MCF 10A (cell line): ENCODE measurements at regions of chr1 and their contacts with region 1.

Region 1: GRCh38 chr1:181189691-181190363 is 101.3 kb downstream of the IER5 start:
- DNase-seq: peak; percentile 69
- H3K4me3 Mint-ChIP-seq: no peak overlapping the region
- H3K27ac Mint-ChIP-seq: no peak overlapping the region
- H3K4me1 Mint-ChIP-seq: peaks cover 6% of the 10 kb centered on the region
- H3K27me3 Mint-ChIP-seq: peaks cover 35% of the 10 kb centered on the region
- CTCF ChIP-seq: peak; percentile 100

Region 2: GRCh38 chr1:181206513-181206912 is 16.7 kb after region 1 on chr1:
- CTCF ChIA-PET with region 1: interaction called, 27 read pairs
- POLR2A ChIA-PET with region 1: no interaction called
- intact Hi-C with region 1: no loop called
- DNase-seq: no peak
- H3K4me3 Mint-ChIP-seq: no peak overlapping the region
- H3K27ac Mint-ChIP-seq: no peak overlapping the region
- H3K4me1 Mint-ChIP-seq: no peaks in the 10 kb centered on the region
- H3K27me3 Mint-ChIP-seq: no peaks in the 10 kb centered on the region
- CTCF ChIP-seq: no peak

Region 3: DNA sequence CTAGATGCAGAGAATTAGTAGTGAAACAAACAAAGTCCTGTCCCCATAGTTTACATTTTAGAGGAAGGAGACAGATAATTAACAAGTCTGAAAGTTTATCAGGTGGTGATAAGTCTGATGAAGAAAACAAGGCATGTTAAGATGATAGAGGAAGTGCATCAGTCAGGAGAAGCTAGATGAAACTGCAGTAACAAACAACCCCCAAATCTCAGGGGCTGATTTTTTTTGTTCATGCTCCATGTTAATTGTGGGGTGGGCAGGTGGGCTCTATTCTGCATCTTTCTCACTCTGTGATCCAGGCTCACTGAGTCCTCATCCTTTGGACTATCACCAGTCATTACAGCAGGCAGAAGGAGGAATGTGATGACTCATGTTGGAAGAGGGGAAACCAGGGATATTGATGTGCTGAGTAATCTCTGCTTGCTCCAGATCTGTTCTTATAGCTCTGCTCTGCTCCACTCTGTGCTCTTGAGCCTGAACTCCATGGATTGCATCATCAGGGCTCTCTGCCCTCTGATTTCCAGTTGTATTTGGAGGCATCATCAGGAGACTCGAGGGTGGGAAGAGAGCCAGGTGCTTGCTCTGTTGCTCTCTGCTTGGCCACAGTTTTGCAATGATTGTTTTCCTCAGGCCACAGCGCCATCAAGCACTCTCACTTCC is 65.6 kb after region 1 on chr1:
- CTCF ChIA-PET with region 1: interaction called, 3 read pairs
- POLR2A ChIA-PET with region 1: interaction called, 5 read pairs
- intact Hi-C with region 1: loop called (anchors 5 kb)
- DNase-seq: peak; percentile 100
- H3K4me3 Mint-ChIP-seq: no peak overlapping the region
- H3K27ac Mint-ChIP-seq: peak overlapping the region; percentile 80
- H3K4me1 Mint-ChIP-seq: peaks cover 53% of the 10 kb centered on the region
- H3K27me3 Mint-ChIP-seq: peaks cover 15% of the 10 kb centered on the region
- CTCF ChIP-seq: no peak

Region 4: DNA sequence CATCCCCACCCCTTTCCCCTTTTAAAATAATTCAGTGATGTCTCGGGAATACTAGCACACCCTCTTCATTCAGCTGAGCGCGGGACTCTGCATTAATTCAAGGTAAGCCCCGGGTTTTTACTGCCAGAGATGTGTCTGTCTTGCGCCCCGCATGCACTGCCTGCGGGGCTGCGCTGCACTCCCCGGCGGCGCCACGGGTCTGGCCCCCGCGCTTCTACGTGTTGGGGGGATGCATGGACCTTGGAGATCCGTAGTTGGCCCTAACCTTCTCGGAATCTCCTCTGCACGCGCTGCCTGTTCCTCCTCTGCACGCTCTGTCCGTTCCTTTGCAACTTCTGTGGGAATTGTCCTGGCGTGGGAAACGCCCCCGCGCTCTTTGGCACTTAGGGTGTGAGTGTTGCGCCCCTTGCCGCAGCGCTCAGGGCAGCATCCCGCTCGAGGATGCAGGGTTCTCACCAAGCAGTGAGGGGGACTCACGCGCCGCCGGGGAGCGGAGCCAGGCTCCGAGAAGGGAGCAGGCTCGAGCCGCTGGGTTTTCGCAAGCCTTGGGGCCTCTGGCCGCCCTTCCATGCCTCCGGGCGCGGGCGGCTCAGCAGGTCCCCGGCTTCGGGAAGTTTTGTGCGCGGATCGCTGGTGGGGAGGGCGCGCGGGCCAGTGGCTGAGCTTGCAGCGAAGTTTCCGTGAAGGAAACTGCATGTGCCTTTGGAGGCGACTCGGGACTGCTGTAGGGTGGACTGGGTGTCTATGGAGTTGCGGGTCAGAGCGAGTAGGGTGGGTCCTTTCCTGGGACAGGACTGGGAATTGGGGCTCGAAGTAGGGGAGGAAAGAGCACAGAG is 128.4 kb after region 1 on chr1:
- CTCF ChIA-PET with region 1: no interaction called
- POLR2A ChIA-PET with region 1: no interaction called
- intact Hi-C with region 1: no loop called
- DNase-seq: no peak
- H3K4me3 Mint-ChIP-seq: no peak overlapping the region
- H3K27ac Mint-ChIP-seq: no peak overlapping the region
- H3K4me1 Mint-ChIP-seq: peaks cover 5% of the 10 kb centered on the region
- H3K27me3 Mint-ChIP-seq: peaks cover 62% of the 10 kb centered on the region
- CTCF ChIP-seq: no peak

Region 5: DNA sequence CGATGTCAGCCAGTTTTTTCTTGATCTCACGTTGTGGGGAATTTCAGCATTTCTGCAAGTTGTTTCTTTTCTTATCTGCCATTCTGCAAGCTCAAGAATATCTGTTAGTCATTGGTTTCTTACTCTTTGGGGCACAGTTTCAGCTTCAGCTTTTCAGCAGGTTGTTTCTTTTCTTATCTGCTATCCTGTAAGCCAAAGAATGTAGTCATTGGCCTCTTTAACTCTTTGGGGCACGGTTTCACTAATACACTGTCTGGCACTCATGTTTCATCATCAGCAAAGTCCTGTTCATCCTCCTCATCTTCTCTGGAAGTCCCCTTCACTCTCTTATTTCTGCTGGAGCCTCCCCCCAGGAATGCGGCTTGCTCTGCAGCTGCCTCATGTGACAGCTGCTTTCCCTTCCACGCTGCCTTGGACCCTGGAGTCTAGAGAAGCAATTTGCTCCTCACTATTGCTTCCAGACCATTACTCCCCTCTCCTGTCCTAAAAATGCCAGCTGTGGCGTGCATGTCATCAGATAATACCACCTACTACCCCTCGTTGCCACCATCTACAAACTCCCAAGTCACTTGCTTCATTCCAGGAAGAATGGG is 226.5 kb after region 1 on chr1:
- CTCF ChIA-PET with region 1: interaction called, 83 read pairs
- POLR2A ChIA-PET with region 1: no interaction called
- intact Hi-C with region 1: no loop called
- DNase-seq: no peak
- H3K4me3 Mint-ChIP-seq: no peak overlapping the region
- H3K27ac Mint-ChIP-seq: no peak overlapping the region
- H3K4me1 Mint-ChIP-seq: no peaks in the 10 kb centered on the region
- H3K27me3 Mint-ChIP-seq: no peaks in the 10 kb centered on the region
- CTCF ChIP-seq: no peak

Region 6: DNA sequence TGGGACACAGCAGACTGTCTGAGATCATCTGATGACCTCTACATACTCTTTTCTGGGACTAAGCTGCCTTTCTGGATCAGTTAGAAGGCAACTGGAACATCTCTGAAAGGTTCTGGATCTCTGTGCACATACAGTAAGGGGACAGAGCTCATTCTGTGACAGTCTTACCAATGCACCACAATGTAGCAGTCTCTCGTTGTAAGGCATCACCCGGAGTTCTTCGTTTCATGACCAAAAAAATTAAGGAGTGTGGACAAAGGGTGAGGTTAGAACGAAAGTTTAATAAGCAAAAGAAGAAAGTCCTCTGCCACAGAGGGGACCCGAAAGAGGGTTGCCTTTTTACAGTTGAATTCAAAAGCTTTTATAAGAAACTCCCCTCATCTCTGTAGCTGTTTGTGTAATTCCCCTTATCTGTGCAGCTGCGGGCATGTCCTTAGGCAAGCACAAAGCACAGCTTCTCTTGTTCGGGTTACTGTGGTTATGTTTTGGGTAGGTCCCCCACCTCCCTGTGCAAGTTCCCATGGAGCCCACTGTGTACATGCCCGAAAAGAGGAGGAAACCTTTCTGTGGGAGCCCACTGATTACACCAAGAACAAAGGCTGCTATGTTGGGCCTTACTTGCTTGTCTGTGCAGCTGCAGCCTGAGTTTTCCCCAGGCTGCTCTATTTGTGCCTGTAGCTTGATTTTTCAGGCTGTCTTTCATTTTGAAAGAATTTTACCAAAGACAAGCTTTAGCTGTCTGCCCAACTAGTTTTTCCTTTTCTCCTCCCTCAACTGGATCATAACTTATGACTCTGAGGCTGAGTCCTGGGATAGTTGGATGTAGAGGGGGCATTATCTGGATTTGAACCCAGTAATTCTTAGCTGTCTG is 240.4 kb after region 1 on chr1:
- CTCF ChIA-PET with region 1: interaction called, 271 read pairs
- POLR2A ChIA-PET with region 1: interaction called, 6 read pairs
- intact Hi-C with region 1: no loop called
- DNase-seq: no peak
- H3K4me3 Mint-ChIP-seq: no peak overlapping the region
- H3K27ac Mint-ChIP-seq: no peak overlapping the region
- H3K4me1 Mint-ChIP-seq: no peaks in the 10 kb centered on the region
- H3K27me3 Mint-ChIP-seq: peaks cover 54% of the 10 kb centered on the region
- CTCF ChIP-seq: no peak

Region 7: GRCh38 chr1:182614796-182615454 is 1425.1 kb after region 1 on chr1:
- CTCF ChIA-PET with region 1: no interaction called
- POLR2A ChIA-PET with region 1: no interaction called
- intact Hi-C with region 1: loop called (anchors 10 kb)
- DNase-seq: peak; percentile 88
- H3K4me3 Mint-ChIP-seq: peak overlapping the region; percentile 63
- H3K27ac Mint-ChIP-seq: no peak overlapping the region
- H3K4me1 Mint-ChIP-seq: peaks cover 44% of the 10 kb centered on the region
- H3K27me3 Mint-ChIP-seq: no peaks in the 10 kb centered on the region
- CTCF ChIP-seq: no peak